ENCODE measurements at regions of chr12 and their contacts with region 1.

Region 1: DNA sequence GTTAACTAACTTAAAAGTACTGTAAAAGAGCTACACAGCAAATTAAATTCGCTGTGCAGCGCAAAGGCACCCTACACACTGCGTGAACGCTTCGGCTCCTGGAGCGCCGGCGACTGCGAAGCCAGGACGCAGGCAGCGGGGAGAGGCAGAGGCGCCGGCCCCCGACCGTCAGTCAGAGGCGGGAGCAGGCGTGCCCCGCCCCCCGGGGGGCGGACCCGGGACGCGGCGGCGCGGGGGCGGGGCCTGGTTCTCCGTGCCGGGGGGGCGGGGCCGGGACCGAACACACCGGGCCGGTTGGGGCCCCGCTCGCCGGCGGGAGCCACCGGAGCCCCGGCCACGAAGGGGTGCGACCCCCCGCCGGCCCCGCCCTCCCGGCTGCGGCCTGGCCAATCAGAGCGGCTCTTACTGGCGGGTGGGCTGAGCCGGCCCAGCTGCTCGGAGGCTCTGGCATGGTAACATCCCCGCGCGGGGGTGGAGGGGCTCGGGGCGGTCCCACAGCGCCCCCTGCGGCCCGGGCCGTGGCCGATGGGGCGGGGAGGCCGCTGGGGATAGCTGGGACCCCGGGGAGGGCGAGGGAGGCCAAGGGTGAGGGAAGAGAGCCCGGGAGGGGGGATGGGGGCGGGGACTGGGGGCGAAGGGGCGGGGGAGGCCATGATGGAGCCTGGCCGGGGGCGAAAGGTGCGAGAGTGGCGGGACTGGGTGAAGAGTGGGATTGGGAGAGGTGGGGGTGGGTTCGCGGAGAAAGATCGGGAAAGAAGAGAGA is at the start of gene PRPF40B:
- DNase-seq: peak; percentile 92
- ATAC-seq: peak; percentile 83
- H3K4me3 Mint-ChIP-seq: peak within 1 kb of the TSS; percentile 85
- H3K27ac Mint-ChIP-seq: peak within 1 kb of the TSS; percentile 82
- H3K4me1 Mint-ChIP-seq: peaks cover 23% of the 10 kb centered on the region
- H3K27me3 Mint-ChIP-seq: peaks cover 28% of the 10 kb centered on the region
- total RNA-seq, gene PRPF40B: 16.5 to 18.0 TPM

Region 2: DNA sequence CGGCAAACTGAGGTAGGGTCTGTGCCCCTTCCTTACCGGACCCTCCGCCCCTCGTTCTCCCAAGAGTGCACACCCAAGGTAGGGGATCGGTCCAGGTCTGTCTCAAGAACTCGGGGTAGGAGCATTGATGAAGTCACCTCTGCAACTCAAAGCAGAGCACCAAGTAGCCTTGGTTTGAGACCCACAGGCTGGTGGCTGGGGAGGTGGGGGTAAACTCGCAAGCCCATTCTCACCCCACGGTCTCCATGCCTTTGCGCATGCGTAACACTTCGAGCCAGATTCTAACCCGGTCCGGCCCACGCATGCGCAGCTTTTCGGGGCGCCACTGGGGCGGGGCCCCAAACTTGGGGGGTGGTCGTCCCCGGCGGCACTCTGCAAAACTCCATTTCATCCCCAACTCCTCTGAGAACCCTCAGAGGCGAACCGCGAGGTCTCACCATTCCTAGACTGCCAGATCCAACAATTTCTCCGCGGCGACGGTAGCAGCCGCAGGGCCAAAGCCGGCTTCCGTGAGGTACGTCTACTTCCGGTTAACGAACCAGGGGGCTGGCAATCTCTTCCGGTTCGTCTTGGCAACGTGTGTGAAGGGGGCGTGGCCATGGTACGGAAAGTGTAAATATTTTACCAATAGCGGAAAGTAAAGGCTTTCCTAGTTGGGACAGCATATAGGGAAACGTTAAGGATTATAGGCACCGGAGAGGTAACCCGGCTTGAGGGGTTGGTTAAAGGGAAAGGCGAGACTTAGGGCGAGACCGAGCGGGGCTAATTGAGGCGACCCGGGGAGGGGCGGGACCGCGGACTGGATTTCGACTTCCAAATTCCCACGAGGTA is 55.5 kb before region 1 on chr12 and contains the start of gene MCRS1:
- POLR2A ChIA-PET with region 1: interaction called, 18 read pairs
- DNase-seq: peak; percentile 91
- ATAC-seq: peak; percentile 72
- H3K4me3 Mint-ChIP-seq: peak within 1 kb of the TSS; percentile 98
- H3K27ac Mint-ChIP-seq: peak within 1 kb of the TSS; percentile 99
- H3K4me1 Mint-ChIP-seq: peaks cover 46% of the 10 kb centered on the region
- H3K27me3 Mint-ChIP-seq: no peaks in the 10 kb centered on the region
- total RNA-seq, gene MCRS1: 83.8 to 83.9 TPM

Region 3: GRCh38 chr12:49603721-49604120 is 19.6 kb before region 1 on chr12:
- POLR2A ChIA-PET with region 1: interaction called, 15 read pairs
- DNase-seq: no peak
- ATAC-seq: no peak
- H3K4me3 Mint-ChIP-seq: no peak overlapping the region
- H3K27ac Mint-ChIP-seq: no peak overlapping the region
- H3K4me1 Mint-ChIP-seq: peaks cover 9% of the 10 kb centered on the region
- H3K27me3 Mint-ChIP-seq: no peaks in the 10 kb centered on the region